Naive thymus-derived CD4-positive, alpha-beta T cell (primary cell): ENCODE measurements at regions of chr2 and their contacts with region 1.

Region 1: GRCh38 chr2:74052732-74053597 is 68.3 kb downstream of the TET3 start:
- DNase-seq: peak in 7 of 9 donors; percentile 42 to 72 (median 60)
- ATAC-seq: peak; percentile 90
- H3K4me3 ChIP-seq: peak overlapping the region; percentile 31
- H3K4me3 Mint-ChIP-seq: peak overlapping the region; percentile 53 to 76 (median 68)
- H3K27ac ChIP-seq: peak overlapping the region; percentile 17
- H3K27ac Mint-ChIP-seq: peak overlapping the region; percentile 47 to 93 (median 87)
- H3K4me1 ChIP-seq: peaks cover 17 to 20% of the 10 kb centered on the region in 2 donors
- H3K4me1 Mint-ChIP-seq: peaks cover 33 to 85% (median 57%) of the 10 kb centered on the region in 7 donors
- H3K27me3 ChIP-seq: no peaks in the 10 kb centered on the region
- H3K27me3 Mint-ChIP-seq: no peaks in the 10 kb centered on the region

Region 2: GRCh38 chr2:74017223-74017622 is 35.7 kb before region 1 on chr2:
- CTCF ChIA-PET with region 1: no interaction called
- POLR2A ChIA-PET with region 1: interaction called, 4 read pairs
- intact Hi-C with region 1: loop called in 1 of 2 experiments (anchors 5 kb)
- DNase-seq: no peak
- ATAC-seq: peak; percentile 70
- H3K4me3 ChIP-seq: no peak overlapping the region
- H3K4me3 Mint-ChIP-seq: no peak overlapping the region
- H3K27ac ChIP-seq: no peak overlapping the region
- H3K27ac Mint-ChIP-seq: peak overlapping the region in 4 of 9 donors; percentile 5 to 40 (median 32)
- H3K4me1 ChIP-seq: peaks cover 2 to 22% of the 10 kb centered on the region in 2 donors
- H3K4me1 Mint-ChIP-seq: peaks cover 23 to 70% (median 57%) of the 10 kb centered on the region in 7 donors
- H3K27me3 ChIP-seq: no peaks in the 10 kb centered on the region
- H3K27me3 Mint-ChIP-seq: no peaks in the 10 kb centered on the region

Region 3: GRCh38 chr2:74031221-74031620 is 21.7 kb before region 1 on chr2:
- CTCF ChIA-PET with region 1: interaction called, 5 read pairs
- POLR2A ChIA-PET with region 1: interaction called, 5 read pairs
- intact Hi-C with region 1: loop called (anchors 2 kb)
- DNase-seq: no peak
- ATAC-seq: no peak
- H3K4me3 ChIP-seq: no peak overlapping the region
- H3K4me3 Mint-ChIP-seq: peak overlapping the region in 9 of 10 donors; percentile 33 to 99 (median 83)
- H3K27ac ChIP-seq: no peak overlapping the region
- H3K27ac Mint-ChIP-seq: peak overlapping the region in 8 of 9 donors; percentile 40 to 97 (median 88)
- H3K4me1 ChIP-seq: peaks cover 32 to 62% of the 10 kb centered on the region in 2 donors
- H3K4me1 Mint-ChIP-seq: peaks cover 49 to 88% (median 78%) of the 10 kb centered on the region in 7 donors
- H3K27me3 ChIP-seq: no peaks in the 10 kb centered on the region
- H3K27me3 Mint-ChIP-seq: no peaks in the 10 kb centered on the region

Region 4: GRCh38 chr2:74429487-74430451 is 376.8 kb after region 1 on chr2:
- CTCF ChIA-PET with region 1: no interaction called
- POLR2A ChIA-PET with region 1: no interaction called
- intact Hi-C with region 1: no loop called
- DNase-seq: no peak
- ATAC-seq: no peak
- H3K4me3 ChIP-seq: no peak overlapping the region
- H3K4me3 Mint-ChIP-seq: no peak overlapping the region
- H3K27ac ChIP-seq: no peak overlapping the region
- H3K27ac Mint-ChIP-seq: no peak overlapping the region
- H3K4me1 ChIP-seq: no peaks in the 10 kb centered on the region
- H3K4me1 Mint-ChIP-seq: peaks cover 0 to 5% (median 0%) of the 10 kb centered on the region in 7 donors
- H3K27me3 ChIP-seq: no peaks in the 10 kb centered on the region
- H3K27me3 Mint-ChIP-seq: no peaks in the 10 kb centered on the region